Uterus (tissue), 4 donors: ENCODE measurements at regions of chr15 and their contacts with region 1.

Region 1: DNA sequence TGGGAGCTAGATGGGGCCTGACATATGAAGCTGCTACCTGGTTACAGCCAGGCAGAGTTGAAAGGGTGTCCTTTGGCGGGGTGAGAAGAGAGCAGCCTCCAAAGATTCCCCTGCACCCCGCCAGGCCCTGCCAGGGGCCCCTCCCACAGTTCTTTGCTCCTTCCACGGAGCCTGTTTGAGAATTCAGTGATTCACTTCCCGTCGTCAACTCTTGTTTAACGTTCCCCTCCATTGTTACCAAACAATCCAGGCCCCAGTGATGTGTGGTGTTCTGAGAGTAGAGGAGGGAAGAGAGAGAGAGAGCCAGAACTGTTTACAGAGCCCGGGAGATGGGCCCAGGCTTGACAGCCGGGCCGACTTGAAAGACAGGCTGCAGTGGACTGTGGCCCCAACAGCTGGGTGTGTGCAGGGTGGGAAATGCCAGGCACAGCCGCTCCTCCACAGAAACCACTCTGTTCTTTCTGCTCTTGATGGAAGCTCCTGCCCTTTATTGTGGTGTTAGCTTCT is 81.5 kb downstream of the SMAD3 start:
- DNase-seq: peak; percentile 56 to 66
- H3K4me3 ChIP-seq: no peak overlapping the region
- H3K27ac ChIP-seq: peak overlapping the region; percentile 88 to 91
- H3K4me1 ChIP-seq: peaks cover 41 to 42% of the 10 kb centered on the region in 2 donors
- H3K27me3 ChIP-seq: no peaks in the 10 kb centered on the region
- CTCF ChIP-seq: no peak
- POLR2A ChIP-seq: no peak

Region 2: DNA sequence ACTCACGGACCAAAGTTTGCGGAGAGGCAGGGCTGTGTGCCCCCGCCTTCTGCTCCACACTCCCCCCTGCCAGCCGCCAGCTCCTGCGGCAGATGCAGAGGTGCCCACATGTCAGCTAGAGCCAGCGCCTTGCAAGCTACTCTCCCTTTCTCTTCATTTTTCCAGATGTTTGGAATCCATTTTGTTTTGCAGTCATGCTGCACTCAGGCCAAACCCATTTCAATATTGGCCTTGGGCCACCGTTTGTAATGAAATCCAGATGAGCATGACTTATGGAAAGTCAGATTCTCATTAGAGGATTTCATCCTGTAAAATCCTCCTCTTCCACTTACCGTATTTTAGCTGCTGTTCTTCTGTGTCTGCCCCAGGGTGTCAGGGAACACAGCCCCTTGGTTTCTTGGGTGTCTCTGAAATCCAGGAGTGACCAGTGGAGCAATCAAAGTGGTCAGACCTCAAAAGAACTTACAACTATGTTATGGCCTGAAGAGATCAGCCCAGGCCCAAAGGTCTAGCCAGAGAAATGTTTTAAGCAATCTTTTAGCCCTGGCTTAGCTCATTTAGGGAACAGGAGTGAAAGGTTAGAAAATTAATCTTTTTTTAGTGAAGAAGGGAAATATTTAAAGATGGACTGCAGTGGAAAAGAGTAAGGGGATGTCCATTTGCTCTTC is 41.8 kb after region 1 on chr15:
- intact Hi-C with region 1: loop called (anchors 5 kb)
- DNase-seq: peak; percentile 81 to 89
- H3K4me3 ChIP-seq: no peak overlapping the region
- H3K27ac ChIP-seq: peak overlapping the region; percentile 91 to 92
- H3K4me1 ChIP-seq: peaks cover 14 to 37% of the 10 kb centered on the region in 2 donors
- H3K27me3 ChIP-seq: no peaks in the 10 kb centered on the region
- CTCF ChIP-seq: no peak
- POLR2A ChIP-seq: no peak